ENCODE measurements at regions of chr16 and their contacts with region 1.

Region 1: GRCh38 chr16:75110637-75111513 is 5.7 kb downstream of the LDHD start:
- DNase-seq: peak; percentile 72
- H3K4me3 ChIP-seq: peak overlapping the region; percentile 45
- H3K27ac ChIP-seq: peak overlapping the region; percentile 84
- H3K27me3 ChIP-seq: no peaks in the 10 kb centered on the region
- CTCF ChIP-seq: peak; percentile 90

Region 2: GRCh38 chr16:74984535-74985296 is 126.2 kb before region 1 on chr16 and contains the start of gene WDR59:
- CTCF ChIA-PET with region 1: interaction called, 13 read pairs
- POLR2A ChIA-PET with region 1: interaction called, 10 read pairs
- DNase-seq: peak; percentile 96
- H3K4me3 ChIP-seq: peak within 1 kb of the TSS; percentile 97
- H3K27ac ChIP-seq: peak within 1 kb of the TSS; percentile 52
- H3K27me3 ChIP-seq: no peaks in the 10 kb centered on the region
- CTCF ChIP-seq: no peak
- polyA plus RNA-seq, gene WDR59: 45.6 and 48.1 TPM in 2 replicates

Region 3: DNA sequence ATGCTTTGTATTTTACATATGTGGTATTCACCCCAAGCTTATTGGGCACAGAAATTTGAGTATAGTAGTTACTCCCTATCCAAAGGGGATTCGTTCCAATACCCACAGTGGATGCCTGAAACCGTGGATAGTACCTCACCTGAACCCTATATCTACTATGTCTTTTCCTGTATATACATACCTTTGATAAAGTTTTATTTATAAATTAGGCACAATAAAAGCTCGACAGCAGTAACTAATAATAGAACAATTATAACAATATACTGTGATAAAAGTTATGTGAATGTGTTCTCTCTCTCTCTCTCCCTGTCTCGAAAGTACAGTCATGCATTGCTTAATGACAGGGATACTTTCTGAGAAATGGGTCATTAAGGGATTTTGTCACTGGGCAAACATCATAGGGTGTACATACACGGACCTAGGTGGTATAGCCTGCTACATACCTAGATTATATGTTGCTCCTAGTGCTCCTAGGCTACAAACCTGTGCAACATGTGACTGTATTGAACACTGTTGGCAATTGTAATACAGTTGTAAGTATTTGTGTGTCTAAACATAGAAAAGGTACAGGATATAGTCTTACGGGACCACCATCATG is 105.3 kb before region 1 on chr16:
- CTCF ChIA-PET with region 1: interaction called, 22 read pairs
- POLR2A ChIA-PET with region 1: interaction called, 4 read pairs
- DNase-seq: no peak
- H3K4me3 ChIP-seq: no peak overlapping the region
- H3K27ac ChIP-seq: no peak overlapping the region
- H3K27me3 ChIP-seq: no peaks in the 10 kb centered on the region
- CTCF ChIP-seq: no peak

Region 4: DNA sequence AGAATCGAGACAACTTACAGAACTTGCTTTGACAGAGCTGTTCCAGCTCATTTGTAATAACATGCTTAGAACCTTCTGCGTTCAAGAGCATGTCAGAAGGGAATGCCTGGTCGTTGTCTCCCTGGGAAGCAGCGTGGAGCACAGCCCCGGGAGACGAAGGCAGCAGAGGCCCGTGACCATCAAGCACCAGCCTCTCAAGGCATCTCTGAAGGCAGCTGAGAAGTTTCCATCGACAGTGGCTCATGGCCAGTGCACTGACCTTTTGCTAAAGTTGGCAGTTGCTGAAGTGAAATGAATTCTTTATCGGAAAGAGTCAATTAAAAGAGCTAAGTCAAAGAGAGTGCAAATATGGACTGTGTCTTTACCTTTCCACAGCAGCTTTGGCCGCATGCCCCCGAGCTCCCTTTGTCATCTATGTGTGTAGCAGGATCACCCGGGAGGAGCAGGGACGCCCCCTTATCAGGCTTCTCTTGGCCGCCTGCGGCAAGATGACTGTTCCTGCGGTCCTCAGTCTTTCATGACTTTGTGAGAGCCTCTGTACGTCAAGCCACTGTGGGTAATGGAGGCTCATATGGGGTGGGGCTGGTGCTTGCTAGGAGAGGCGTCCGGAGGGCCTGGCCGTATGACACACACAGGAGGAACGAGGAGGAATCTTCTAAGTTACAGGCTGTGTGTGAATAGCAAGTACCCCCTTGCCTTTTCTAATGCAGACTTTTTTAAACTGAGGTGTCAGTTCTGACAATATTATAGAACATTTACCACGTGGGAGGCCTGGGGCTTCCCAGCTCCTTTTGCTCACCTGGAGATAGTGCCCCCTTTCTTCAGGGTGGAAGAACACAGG is 48.5 kb before region 1 on chr16:
- CTCF ChIA-PET with region 1: interaction called, 10 read pairs
- POLR2A ChIA-PET with region 1: no interaction called
- DNase-seq: no peak
- H3K4me3 ChIP-seq: no peak overlapping the region
- H3K27ac ChIP-seq: peak overlapping the region; percentile 61
- H3K27me3 ChIP-seq: no peaks in the 10 kb centered on the region
- CTCF ChIP-seq: 0 out of 2 replicates have a peak, but pooled peaks have one; percentile 17

Region 5: DNA sequence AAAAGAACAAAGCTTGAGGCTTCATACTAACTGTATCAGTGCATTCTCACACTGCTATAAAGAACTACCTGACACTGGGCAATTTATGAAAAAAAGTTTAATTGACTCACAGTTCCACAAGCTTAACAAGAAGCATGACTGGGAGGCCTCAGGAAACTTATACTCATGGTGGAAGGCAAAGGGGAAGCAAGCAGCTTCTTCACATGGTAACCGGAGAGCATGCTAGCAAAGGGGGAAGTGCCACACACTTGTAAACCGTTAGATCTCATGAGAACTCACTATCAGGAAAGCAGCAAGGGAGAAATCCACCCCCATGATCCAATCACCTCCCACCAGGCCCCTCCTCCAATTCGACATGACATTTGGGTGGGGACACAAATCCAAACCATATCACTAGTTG is 70.8 kb after region 1 on chr16:
- CTCF ChIA-PET with region 1: no interaction called
- POLR2A ChIA-PET with region 1: no interaction called
- DNase-seq: no peak
- H3K4me3 ChIP-seq: no peak overlapping the region
- H3K27ac ChIP-seq: no peak overlapping the region
- H3K27me3 ChIP-seq: no peaks in the 10 kb centered on the region
- CTCF ChIP-seq: no peak

Region 6: GRCh38 chr16:75534560-75535205 is 423.8 kb after region 1 on chr16:
- CTCF ChIA-PET with region 1: no interaction called
- POLR2A ChIA-PET with region 1: no interaction called
- DNase-seq: no peak
- H3K4me3 ChIP-seq: no peak overlapping the region
- H3K27ac ChIP-seq: no peak overlapping the region
- H3K27me3 ChIP-seq: peaks cover 14% of the 10 kb centered on the region
- CTCF ChIP-seq: no peak